Right cardiac atrium (tissue), 5 donors: ENCODE measurements at regions of chr13 and their contacts with region 1.

Region 1: GRCh38 chr13:20525690-20526544 is at the start of gene CRYL1:
- DNase-seq: peak; percentile 85 to 94 (median 94)
- ATAC-seq: peak; percentile 98 to 99
- H3K4me3 ChIP-seq: peak within 1 kb of the TSS; percentile 84
- H3K27ac ChIP-seq: peak within 1 kb of the TSS; percentile 69
- H3K4me1 ChIP-seq: no peaks in the 10 kb centered on the region
- H3K27me3 ChIP-seq: no peaks in the 10 kb centered on the region
- total RNA-seq, gene CRYL1: 33.0 to 41.8 (median 33.3) TPM

Region 2: GRCh38 chr13:20378721-20379120 is 147.2 kb before region 1 on chr13:
- intact Hi-C with region 1: no loop called
- DNase-seq: no peak
- ATAC-seq: no peak
- H3K4me3 ChIP-seq: no peak overlapping the region
- H3K27ac ChIP-seq: no peak overlapping the region
- H3K4me1 ChIP-seq: no peaks in the 10 kb centered on the region
- H3K27me3 ChIP-seq: no peaks in the 10 kb centered on the region

Region 3: GRCh38 chr13:20566898-20567874 is 41.3 kb after region 1 on chr13 and contains the start of gene IFT88:
- intact Hi-C with region 1: loop called in 1 of 4 experiments (anchors 5 kb)
- DNase-seq: peak; percentile 92 to 96 (median 96)
- ATAC-seq: peak; percentile 98 to 99
- H3K4me3 ChIP-seq: peak within 1 kb of the TSS; percentile 95
- H3K27ac ChIP-seq: peak within 1 kb of the TSS; percentile 100
- H3K4me1 ChIP-seq: peaks cover 2% of the 10 kb centered on the region
- H3K27me3 ChIP-seq: no peaks in the 10 kb centered on the region
- total RNA-seq, gene IFT88: 9.3 to 12.9 (median 10.1) TPM